Endothelial cell of umbilical vein (primary cell): ENCODE measurements at regions of chr3 and their contacts with region 1.

Region 1: GRCh38 chr3:184174646-184175492 is at the start of gene AP2M1:
- DNase-seq: peak; percentile 100
- H3K4me3 ChIP-seq: peak within 1 kb of the TSS; percentile 84 to 97 (median 87)
- H3K27ac ChIP-seq: peak within 1 kb of the TSS; percentile 73
- H3K4me1 ChIP-seq: peaks cover 22% of the 10 kb centered on the region
- H3K27me3 ChIP-seq: no peaks in the 10 kb centered on the region
- CTCF ChIP-seq: peak in 1 of 2 donors; percentile 12
- POLR2A ChIP-seq: peak; percentile 91
- total RNA-seq, gene AP2M1: 400 and 431 TPM in 2 replicates

Region 2: GRCh38 chr3:183937610-183938230 is 237.1 kb before region 1 on chr3:
- CTCF ChIA-PET with region 1: no interaction called
- POLR2A ChIA-PET with region 1: no interaction called
- dilution Hi-C with region 1: no loop called
- intact Hi-C with region 1: no loop called
- DNase-seq: no peak
- H3K4me3 ChIP-seq: no peak overlapping the region
- H3K27ac ChIP-seq: no peak overlapping the region
- H3K4me1 ChIP-seq: no peaks in the 10 kb centered on the region
- H3K27me3 ChIP-seq: no peaks in the 10 kb centered on the region
- CTCF ChIP-seq: no peak
- POLR2A ChIP-seq: no peak

Region 3: DNA sequence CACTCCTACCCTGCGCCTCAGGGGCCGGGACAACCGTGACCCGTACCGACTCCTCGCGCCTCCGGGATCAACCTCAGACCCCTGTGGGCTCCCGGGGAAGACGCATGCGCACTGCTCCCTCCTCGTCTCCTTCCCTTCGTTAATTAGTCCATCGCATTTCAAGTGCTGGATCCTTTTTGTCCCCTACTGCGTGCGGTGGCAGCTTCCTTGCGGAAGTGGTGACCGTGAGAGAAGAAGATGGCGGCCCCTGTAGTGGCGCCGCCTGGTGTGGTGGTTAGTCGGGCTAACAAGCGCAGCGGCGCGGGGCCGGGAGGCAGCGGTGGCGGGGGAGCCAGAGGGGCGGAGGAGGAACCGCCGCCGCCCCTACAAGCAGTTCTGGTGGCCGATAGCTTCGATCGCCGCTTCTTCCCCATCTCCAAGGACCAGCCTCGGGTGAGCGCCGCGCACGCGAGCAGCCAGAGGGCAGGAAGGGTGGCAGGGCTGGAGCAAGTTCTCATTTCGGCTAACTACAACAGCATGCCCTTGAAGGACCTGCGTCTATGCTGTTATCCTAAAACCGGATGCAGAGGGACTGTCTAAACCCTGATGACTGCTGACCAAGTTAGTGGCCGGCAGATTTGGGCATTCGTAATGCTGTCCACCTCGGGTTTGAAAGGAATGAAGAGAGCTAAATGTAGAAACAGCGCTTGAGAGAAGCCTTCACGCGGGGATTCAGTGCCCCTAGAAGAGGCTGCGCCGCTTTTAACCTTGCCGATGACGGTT is 39.5 kb before region 1 on chr3 and contains the start of gene EIF2B5:
- CTCF ChIA-PET with region 1: interaction called, 6 read pairs
- POLR2A ChIA-PET with region 1: no interaction called
- dilution Hi-C with region 1: no loop called
- intact Hi-C with region 1: loop called (anchors 1 kb)
- DNase-seq: peak; percentile 96
- H3K4me3 ChIP-seq: peak within 1 kb of the TSS; percentile 67 to 92 (median 90)
- H3K27ac ChIP-seq: peak within 1 kb of the TSS; percentile 56
- H3K4me1 ChIP-seq: peaks cover 27% of the 10 kb centered on the region
- H3K27me3 ChIP-seq: no peaks in the 10 kb centered on the region
- CTCF ChIP-seq: peak; percentile 26 to 41
- POLR2A ChIP-seq: peak; percentile 77
- total RNA-seq, gene EIF2B5: 38.8 and 44.7 TPM in 2 replicates

Region 4: GRCh38 chr3:184154885-184155643 is 19.8 kb before region 1 on chr3 and contains the start of gene DVL3:
- CTCF ChIA-PET with region 1: interaction called, 6 read pairs
- POLR2A ChIA-PET with region 1: interaction called, 6 read pairs
- dilution Hi-C with region 1: no loop called
- intact Hi-C with region 1: loop called (anchors 1 kb)
- DNase-seq: peak; percentile 40
- H3K4me3 ChIP-seq: peak within 1 kb of the TSS; percentile 78 to 87 (median 83)
- H3K27ac ChIP-seq: peak within 1 kb of the TSS; percentile 25
- H3K4me1 ChIP-seq: peaks cover 17% of the 10 kb centered on the region
- H3K27me3 ChIP-seq: no peaks in the 10 kb centered on the region
- CTCF ChIP-seq: no peak
- POLR2A ChIP-seq: peak; percentile 61
- total RNA-seq, gene DVL3: 59.0 and 61.3 TPM in 2 replicates

Region 5: DNA sequence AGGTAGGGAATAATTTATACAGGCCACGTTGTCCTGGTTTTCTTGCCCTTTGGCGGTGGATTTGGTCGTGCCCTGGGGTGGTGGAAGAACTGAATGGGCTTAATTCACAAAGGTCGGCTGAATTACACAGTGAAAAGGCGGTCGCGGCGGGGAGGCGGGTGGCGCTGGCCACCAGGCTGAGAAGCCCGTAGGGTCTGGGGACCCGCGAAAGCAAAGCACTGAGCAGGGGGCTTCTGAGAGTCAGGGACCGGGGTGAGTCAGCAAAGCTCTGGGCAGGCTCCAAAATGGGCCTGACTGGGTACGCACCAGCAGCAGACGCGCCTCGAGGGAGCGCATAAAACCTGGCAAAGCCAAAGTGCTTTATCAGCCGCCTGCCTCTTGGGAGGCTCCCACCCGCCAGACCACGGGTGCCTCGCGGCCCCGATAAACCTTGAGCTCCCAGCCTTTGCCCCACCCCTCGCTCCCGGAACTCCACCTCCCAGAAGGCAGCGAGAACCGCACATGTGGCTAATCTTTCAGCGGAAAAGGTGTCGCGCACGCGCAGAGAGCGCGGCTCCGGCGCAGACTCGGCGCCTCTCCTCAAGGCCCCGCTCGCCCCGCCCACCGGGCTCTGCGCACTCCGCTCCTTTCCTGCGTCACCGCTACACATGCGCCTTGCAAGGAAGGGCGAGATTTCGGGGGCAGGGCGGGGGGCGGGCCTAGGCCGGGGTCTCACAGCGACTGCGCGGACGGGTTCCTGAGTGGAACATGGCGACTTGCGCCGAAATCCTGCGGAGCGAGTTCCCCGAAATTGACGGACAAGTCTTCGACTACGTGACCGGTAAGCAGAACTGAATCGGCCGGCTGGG is 10.8 kb after region 1 on chr3 and contains the start of gene ABCF3:
- CTCF ChIA-PET with region 1: interaction called, 14 read pairs
- POLR2A ChIA-PET with region 1: interaction called, 5 read pairs
- dilution Hi-C with region 1: no loop called
- intact Hi-C with region 1: loop called (anchors 1 kb)
- DNase-seq: peak; percentile 99
- H3K4me3 ChIP-seq: peak within 1 kb of the TSS; percentile 5 to 92 (median 54)
- H3K27ac ChIP-seq: peak within 1 kb of the TSS; percentile 64
- H3K4me1 ChIP-seq: peaks cover 14% of the 10 kb centered on the region
- H3K27me3 ChIP-seq: no peaks in the 10 kb centered on the region
- CTCF ChIP-seq: no peak
- POLR2A ChIP-seq: peak; percentile 87
- total RNA-seq, gene ABCF3: 65.6 and 68.8 TPM in 2 replicates

Region 6: DNA sequence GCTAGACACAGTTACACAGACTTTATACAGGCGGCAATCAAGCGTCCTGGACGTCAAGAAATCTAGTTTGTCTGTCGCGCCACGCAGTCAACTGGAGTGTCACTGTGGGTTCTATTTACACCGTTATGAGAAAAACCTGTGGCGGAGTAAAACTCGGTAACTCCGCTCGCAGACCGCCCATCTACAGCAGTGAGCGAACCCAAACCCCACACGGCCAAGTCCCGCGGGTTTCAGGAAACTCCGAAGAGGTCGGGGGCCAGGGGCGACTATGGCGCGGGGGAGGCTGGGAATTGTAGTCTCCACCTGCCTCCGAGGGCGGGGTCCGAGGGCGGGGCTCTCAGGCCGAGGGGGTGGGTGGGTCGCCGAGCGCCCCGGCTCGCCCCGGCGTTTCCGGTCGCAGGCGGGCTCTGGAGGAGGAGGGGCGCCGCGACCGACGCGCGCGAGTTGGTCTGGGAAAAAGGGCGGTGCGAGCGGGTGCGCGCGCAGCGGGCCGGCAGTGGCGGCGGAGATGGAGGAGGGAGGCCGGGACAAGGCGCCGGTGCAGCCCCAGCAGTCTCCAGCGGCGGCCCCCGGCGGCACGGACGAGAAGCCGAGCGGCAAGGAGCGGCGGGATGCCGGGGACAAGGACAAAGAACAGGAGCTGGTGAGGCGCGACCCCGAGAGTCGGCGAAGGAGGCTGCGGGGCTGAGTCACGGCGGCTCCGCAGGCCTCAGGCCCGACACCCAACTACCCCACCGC is 124.1 kb after region 1 on chr3 and contains the start of gene PSMD2:
- CTCF ChIA-PET with region 1: no interaction called
- POLR2A ChIA-PET with region 1: interaction called, 4 read pairs
- dilution Hi-C with region 1: no loop called
- intact Hi-C with region 1: loop called (anchors 1 kb)
- DNase-seq: peak; percentile 96
- H3K4me3 ChIP-seq: peak within 1 kb of the TSS; percentile 71 to 89 (median 88)
- H3K27ac ChIP-seq: peak within 1 kb of the TSS; percentile 70
- H3K4me1 ChIP-seq: peaks cover 13% of the 10 kb centered on the region
- H3K27me3 ChIP-seq: peaks cover 0 to 3% of the 10 kb centered on the region in 2 experiments
- CTCF ChIP-seq: no peak
- POLR2A ChIP-seq: peak; percentile 85
- total RNA-seq, gene PSMD2: 400 and 435 TPM in 2 replicates

Region 7: GRCh38 chr3:184314363-184314699 is 139.5 kb after region 1 on chr3 and contains the start of gene EIF4G1:
- CTCF ChIA-PET with region 1: no interaction called
- POLR2A ChIA-PET with region 1: no interaction called
- dilution Hi-C with region 1: no loop called
- intact Hi-C with region 1: loop called (anchors 5 kb)
- DNase-seq: peak; percentile 94
- H3K4me3 ChIP-seq: peak within 1 kb of the TSS; percentile 37 to 84 (median 59)
- H3K27ac ChIP-seq: peak within 1 kb of the TSS; percentile 64
- H3K4me1 ChIP-seq: peaks cover 28% of the 10 kb centered on the region
- H3K27me3 ChIP-seq: no peaks in the 10 kb centered on the region
- CTCF ChIP-seq: no peak
- POLR2A ChIP-seq: peak; percentile 79
- total RNA-seq, gene EIF4G1: 524 and 532 TPM in 2 replicates